Calu3 (cell line): ENCODE measurements at regions of chr5 and their contacts with region 1.

Region 1: DNA sequence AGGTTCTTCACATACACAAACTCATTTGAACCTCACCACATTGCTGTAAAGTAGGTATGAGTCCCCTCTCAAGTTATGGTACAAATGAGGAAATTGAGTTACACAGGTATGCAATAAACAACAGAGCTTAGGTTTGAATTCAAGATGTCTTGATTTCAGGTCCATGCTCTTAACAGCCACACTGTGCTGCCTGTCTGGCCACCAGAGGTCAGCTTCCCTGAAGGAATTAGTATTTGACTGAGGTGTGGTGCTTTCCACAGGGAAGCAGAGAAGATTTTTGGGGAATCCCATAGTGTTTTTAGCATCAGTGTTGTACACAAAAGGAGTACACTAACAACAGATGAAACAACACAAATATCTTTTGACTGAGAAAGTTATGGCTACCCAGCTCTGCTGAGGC is 94.4 kb upstream of the ITGA1 start:
- DNase-seq: peak; percentile 53
- H3K4me3 Mint-ChIP-seq: no peak overlapping the region
- H3K27ac Mint-ChIP-seq: no peak overlapping the region
- H3K4me1 Mint-ChIP-seq: peaks cover 30% of the 10 kb centered on the region
- H3K27me3 Mint-ChIP-seq: peaks cover 8% of the 10 kb centered on the region
- CTCF ChIP-seq: peak; percentile 37

Region 2: GRCh38 chr5:52787600-52788504 is 94.6 kb after region 1 on chr5 and contains the starts of genes ITGA1 and PELO:
- CTCF ChIA-PET with region 1: interaction called, 5 read pairs
- intact Hi-C with region 1: loop called (anchors 5 kb)
- DNase-seq: peak; percentile 77
- H3K4me3 Mint-ChIP-seq: peak within 1 kb of the TSS; percentile 90
- H3K27ac Mint-ChIP-seq: peak within 1 kb of the TSS; percentile 73
- H3K4me1 Mint-ChIP-seq: peaks cover 47% of the 10 kb centered on the region
- H3K27me3 Mint-ChIP-seq: no peaks in the 10 kb centered on the region
- CTCF ChIP-seq: no peak
- total RNA-seq, gene ITGA1: 18.9 and 20.2 TPM in 2 replicates
- total RNA-seq, gene PELO: 24.6 and 26.4 TPM in 2 replicates